Activated CD8-positive, alpha-beta T cell treated with anti-CD3 and anti-CD28 coated beads for 36 hours (primary cell): ENCODE measurements at regions of chr11 and their contacts with region 1.

Region 1: DNA sequence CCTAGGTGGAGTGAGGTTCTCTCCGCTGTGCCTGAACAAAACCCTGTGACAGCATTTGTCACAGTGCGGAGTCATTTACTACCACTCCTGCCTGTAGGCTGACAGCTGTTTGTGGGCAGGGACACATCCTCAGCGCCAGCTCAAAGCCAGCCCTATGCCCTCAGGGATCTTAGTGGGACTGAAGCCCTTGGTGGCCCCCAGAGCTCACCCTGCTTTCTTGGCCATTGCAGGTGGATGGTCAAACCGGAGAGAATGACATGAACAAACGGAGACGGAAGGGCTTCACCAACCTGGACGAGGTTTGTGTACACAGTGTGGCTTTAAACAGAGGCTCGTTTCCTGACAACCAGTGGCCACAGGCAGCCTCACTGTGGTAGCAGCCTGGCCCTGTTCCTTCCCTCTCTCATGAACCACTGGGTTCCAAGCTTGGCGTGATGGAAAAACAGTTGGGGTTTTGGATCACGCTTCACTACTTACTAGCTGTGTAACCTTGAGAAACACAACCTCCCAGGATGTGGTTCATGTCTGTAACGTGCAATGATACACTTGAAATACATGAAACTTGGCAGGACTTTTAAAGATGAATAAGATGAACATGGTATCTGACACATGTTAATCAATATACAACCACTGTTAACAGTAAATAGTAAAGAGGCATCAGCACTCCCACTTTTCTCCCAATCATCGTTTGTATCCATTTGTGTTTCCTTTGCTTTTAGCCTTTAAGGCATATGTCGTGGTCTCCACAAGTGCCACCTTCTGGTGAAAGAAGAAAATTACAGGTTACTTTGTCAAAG is 125.8 kb downstream of the MICAL2 start:
- DNase-seq: peak; percentile 86
- ATAC-seq: peak; percentile 86
- H3K4me3 Mint-ChIP-seq: peak overlapping the region; percentile 36
- H3K27ac Mint-ChIP-seq: peak overlapping the region; percentile 92
- H3K4me1 Mint-ChIP-seq: peaks cover 30% of the 10 kb centered on the region
- H3K27me3 Mint-ChIP-seq: no peaks in the 10 kb centered on the region
- CTCF ChIP-seq: peak; percentile 91

Region 2: GRCh38 chr11:12043959-12044819 is 192.0 kb before region 1 on chr11:
- CTCF ChIA-PET with region 1: interaction called, 51 read pairs
- POLR2A ChIA-PET with region 1: no interaction called
- intact Hi-C with region 1: loop called (anchors 5 kb)
- DNase-seq: peak; percentile 74
- ATAC-seq: peak; percentile 81
- H3K4me3 Mint-ChIP-seq: no peak overlapping the region
- H3K27ac Mint-ChIP-seq: no peak overlapping the region
- H3K4me1 Mint-ChIP-seq: peaks cover 4% of the 10 kb centered on the region
- H3K27me3 Mint-ChIP-seq: peaks cover 2% of the 10 kb centered on the region
- CTCF ChIP-seq: peak; percentile 94

Region 3: DNA sequence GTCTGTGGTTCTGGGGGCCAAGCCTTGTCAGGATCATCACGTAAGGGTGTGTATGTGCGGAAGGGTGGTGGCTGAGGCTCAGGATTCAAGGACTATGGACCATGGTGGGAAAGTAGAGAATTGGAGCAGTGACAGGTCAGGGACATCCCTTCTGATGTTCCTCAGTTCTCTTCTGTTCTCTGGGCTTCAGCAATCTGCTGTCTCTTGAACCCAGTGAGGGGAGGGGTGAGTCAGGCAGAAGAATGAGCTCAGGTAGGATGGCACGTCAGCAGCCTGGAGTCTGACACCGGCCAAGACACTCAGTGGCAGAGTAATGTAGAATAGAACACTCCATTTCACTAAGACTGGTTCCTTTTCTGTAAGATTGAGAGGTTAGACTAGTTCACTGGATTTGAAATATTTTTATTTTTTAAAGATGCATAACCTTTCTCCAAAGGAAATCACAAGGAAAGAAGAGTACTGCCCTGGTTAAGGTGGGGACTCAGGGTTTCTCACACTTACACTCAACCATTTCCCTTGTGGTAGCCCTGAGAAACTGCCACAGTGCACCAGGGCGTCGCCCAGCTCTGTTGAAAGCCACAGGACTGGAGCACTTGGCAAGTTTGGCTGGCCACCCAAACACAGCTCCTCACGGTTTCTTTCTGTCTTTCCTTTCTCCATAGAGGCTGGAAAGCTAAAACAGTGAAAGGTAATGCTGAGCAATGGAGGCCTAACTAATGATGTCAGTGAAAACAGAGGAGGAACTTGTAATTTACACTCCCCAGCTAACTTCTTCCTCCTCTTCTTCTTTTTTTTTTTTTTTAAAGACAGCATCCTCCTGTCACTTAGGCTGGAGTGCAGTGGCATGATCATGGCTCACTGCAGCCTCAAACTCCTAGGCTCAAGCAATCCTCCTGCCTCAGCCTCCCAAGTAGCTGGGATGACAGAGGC is 148.8 kb before region 1 on chr11:
- CTCF ChIA-PET with region 1: interaction called, 30 read pairs
- POLR2A ChIA-PET with region 1: no interaction called
- intact Hi-C with region 1: no loop called
- DNase-seq: peak; percentile 69
- ATAC-seq: peak; percentile 86
- H3K4me3 Mint-ChIP-seq: no peak overlapping the region
- H3K27ac Mint-ChIP-seq: peak overlapping the region; percentile 75
- H3K4me1 Mint-ChIP-seq: peaks cover 60% of the 10 kb centered on the region
- H3K27me3 Mint-ChIP-seq: no peaks in the 10 kb centered on the region
- CTCF ChIP-seq: no peak

Region 4: GRCh38 chr11:12110201-12110713 is 125.9 kb before region 1 on chr11 and contains the start of gene MICAL2:
- CTCF ChIA-PET with region 1: interaction called, 16 read pairs
- POLR2A ChIA-PET with region 1: interaction called, 5 read pairs
- intact Hi-C with region 1: no loop called
- DNase-seq: peak; percentile 88
- ATAC-seq: peak; percentile 92
- H3K4me3 Mint-ChIP-seq: peak within 1 kb of the TSS; percentile 78
- H3K27ac Mint-ChIP-seq: peak within 1 kb of the TSS; percentile 94
- H3K4me1 Mint-ChIP-seq: peaks cover 31% of the 10 kb centered on the region
- H3K27me3 Mint-ChIP-seq: no peaks in the 10 kb centered on the region
- CTCF ChIP-seq: no peak
- total RNA-seq, gene MICAL2: 99.8 to 105 TPM

Region 5: GRCh38 chr11:12164061-12165014 is 71.8 kb before region 1 on chr11:
- CTCF ChIA-PET with region 1: interaction called, 17 read pairs
- POLR2A ChIA-PET with region 1: interaction called, 4 read pairs
- intact Hi-C with region 1: no loop called
- DNase-seq: peak; percentile 40
- ATAC-seq: peak; percentile 45
- H3K4me3 Mint-ChIP-seq: no peak overlapping the region
- H3K27ac Mint-ChIP-seq: peak overlapping the region; percentile 37
- H3K4me1 Mint-ChIP-seq: peaks cover 37% of the 10 kb centered on the region
- H3K27me3 Mint-ChIP-seq: no peaks in the 10 kb centered on the region
- CTCF ChIP-seq: no peak

Region 6: DNA sequence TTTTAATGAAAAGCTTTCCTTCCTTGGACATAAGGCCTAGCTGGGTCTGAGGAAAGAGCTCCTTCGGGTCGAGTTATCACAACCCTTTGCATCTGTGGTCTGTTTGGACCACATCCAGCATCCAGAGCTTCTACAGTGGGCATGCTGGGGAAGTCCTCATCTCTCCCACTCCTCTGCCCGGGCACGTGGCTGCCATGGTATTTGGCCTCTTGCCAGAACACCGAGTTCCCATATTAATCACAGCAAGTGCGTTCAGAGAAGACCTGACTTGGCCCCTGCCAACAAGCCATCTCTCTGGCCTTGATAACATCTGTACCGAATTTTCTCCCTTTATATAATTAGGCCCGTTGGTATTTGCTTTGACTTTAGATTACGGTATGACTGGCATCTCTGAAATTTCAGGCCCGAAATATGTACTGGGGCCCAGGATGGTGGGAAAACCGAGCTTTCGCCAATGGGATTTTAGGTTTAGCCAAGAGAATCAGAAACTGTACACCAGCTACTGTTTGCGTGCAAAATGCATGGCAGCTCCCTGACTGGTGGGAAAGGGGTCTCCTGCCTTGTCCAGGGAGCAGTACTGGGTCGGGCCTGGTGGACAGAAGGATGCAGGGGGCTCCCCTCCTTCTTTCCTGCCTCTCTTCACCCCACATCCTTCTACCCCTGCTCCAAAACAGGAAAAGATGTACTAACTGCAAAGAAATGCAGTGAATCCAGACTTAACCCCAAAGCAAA is 35.7 kb before region 1 on chr11:
- CTCF ChIA-PET with region 1: interaction called, 15 read pairs
- POLR2A ChIA-PET with region 1: interaction called, 5 read pairs
- intact Hi-C with region 1: loop called (anchors 5 kb)
- DNase-seq: peak; percentile 39
- ATAC-seq: no peak
- H3K4me3 Mint-ChIP-seq: no peak overlapping the region
- H3K27ac Mint-ChIP-seq: peak overlapping the region; percentile 44
- H3K4me1 Mint-ChIP-seq: peaks cover 80% of the 10 kb centered on the region
- H3K27me3 Mint-ChIP-seq: no peaks in the 10 kb centered on the region
- CTCF ChIP-seq: no peak

Region 7: GRCh38 chr11:12258451-12258850 is 22.3 kb after region 1 on chr11:
- CTCF ChIA-PET with region 1: no interaction called
- POLR2A ChIA-PET with region 1: no interaction called
- intact Hi-C with region 1: no loop called
- DNase-seq: no peak
- ATAC-seq: no peak
- H3K4me3 Mint-ChIP-seq: no peak overlapping the region
- H3K27ac Mint-ChIP-seq: no peak overlapping the region
- H3K4me1 Mint-ChIP-seq: no peaks in the 10 kb centered on the region
- H3K27me3 Mint-ChIP-seq: no peaks in the 10 kb centered on the region
- CTCF ChIP-seq: no peak

Region 8: DNA sequence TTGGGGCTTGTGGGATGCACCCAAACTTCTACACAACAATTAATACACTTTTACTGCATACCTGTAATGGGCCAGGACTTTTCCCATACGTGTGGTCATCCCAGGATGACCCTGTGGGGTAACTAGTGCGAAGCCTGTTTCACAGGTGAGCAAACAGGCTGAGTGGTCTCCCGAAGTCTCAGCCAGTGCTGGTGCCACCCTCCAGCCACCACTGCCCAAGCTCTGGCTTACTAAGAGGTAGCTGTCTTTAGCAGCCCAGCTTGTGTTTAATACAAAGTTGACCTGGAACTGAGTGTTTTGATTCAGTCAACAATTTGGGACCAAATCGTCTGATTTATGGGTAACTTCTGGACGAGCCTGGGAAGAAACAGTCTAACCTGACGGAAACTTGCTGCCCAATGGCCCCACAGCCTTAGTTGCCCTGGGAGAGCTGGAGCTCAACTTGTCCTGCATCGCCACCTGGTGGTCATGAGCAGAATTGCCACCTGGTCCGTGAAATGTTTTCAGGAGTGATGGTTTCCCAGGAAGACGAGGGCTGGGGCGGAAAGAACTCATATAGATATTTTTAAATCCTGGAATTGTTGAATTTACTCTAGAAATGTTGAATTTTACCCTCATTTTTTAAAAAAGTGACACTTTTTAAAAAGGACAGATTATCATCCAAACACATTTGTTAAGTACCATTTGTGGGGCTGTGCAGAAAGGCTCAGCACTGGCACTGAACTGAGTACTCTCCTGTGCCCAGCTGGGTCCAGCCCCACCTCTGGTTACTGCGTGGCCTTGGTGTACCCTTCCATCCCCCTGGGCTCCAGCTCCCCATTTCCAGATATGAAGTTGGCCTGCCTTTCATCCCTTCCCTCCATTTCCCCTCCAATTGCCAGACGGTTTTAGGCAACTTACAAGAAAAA is 45.7 kb after region 1 on chr11:
- CTCF ChIA-PET with region 1: interaction called, 45 read pairs
- POLR2A ChIA-PET with region 1: no interaction called
- intact Hi-C with region 1: no loop called
- DNase-seq: peak; percentile 84
- ATAC-seq: peak; percentile 79
- H3K4me3 Mint-ChIP-seq: no peak overlapping the region
- H3K27ac Mint-ChIP-seq: no peak overlapping the region
- H3K4me1 Mint-ChIP-seq: peaks cover 5% of the 10 kb centered on the region
- H3K27me3 Mint-ChIP-seq: no peaks in the 10 kb centered on the region
- CTCF ChIP-seq: peak; percentile 97

Region 9: GRCh38 chr11:12409991-12410728 is 174.0 kb after region 1 on chr11:
- CTCF ChIA-PET with region 1: no interaction called
- POLR2A ChIA-PET with region 1: no interaction called
- intact Hi-C with region 1: no loop called
- DNase-seq: no peak
- ATAC-seq: no peak
- H3K4me3 Mint-ChIP-seq: no peak overlapping the region
- H3K27ac Mint-ChIP-seq: no peak overlapping the region
- H3K4me1 Mint-ChIP-seq: no peaks in the 10 kb centered on the region
- H3K27me3 Mint-ChIP-seq: peaks cover 4% of the 10 kb centered on the region
- CTCF ChIP-seq: no peak